PC-3 (cell line): ENCODE measurements at regions of chr3 and their contacts with region 1.

Region 1: GRCh38 chr3:49454458-49454857 is 15.6 kb upstream of the DAG1 start:
- DNase-seq: peak; percentile 66
- ATAC-seq: peak; percentile 89
- H3K4me3 ChIP-seq: no peak overlapping the region
- H3K27ac ChIP-seq: no peak overlapping the region
- H3K4me1 ChIP-seq: 0 out of 2 replicates have a peak, but pooled peaks cover 4% of the 10 kb centered on the region
- H3K27me3 ChIP-seq: no peaks in the 10 kb centered on the region
- CTCF ChIP-seq: peak; percentile 65

Region 2: DNA sequence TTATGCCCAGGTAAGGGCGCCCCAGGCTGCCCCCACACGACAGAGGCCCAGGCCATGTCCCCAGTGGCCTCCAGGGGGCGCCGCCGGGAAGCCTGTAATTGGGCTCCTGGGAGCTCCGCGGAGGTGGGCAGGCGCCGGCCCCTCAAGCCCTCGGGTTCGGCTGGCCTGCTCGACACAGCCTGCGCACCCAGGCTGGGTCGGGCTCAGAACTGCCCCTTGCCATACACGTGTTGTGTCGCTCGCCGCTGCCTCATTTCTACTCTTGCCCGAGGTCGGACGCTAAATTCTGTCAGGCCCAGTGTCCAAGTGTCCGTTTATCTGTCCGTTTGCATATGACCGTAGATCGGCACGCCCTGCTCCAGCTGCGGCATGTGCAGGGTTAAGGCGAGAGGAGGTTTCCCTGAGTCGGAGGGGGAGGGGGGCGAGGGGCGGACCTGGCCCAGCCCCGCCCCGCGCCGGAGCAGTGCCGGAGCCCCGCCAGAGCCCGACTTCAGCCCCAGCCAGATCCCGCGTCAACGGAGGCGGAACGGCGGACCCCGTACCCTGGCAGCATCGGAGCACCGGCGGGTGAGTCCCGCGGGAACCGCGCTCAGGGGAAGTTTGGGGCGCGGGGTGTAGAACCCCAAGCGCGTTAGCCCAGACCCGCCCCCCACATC is 283.2 kb before region 1 on chr3 and contains the start of gene KLHDC8B:
- CTCF ChIA-PET with region 1: interaction called, 3 read pairs
- POLR2A ChIA-PET with region 1: no interaction called
- intact Hi-C with region 1: loop called (anchors 1 kb)
- DNase-seq: peak; percentile 81
- ATAC-seq: peak; percentile 91
- H3K4me3 ChIP-seq: peak within 1 kb of the TSS; percentile 74
- H3K27ac ChIP-seq: no peak within 1 kb of the TSS
- H3K4me1 ChIP-seq: peaks cover 18% of the 10 kb centered on the region
- H3K27me3 ChIP-seq: no peaks in the 10 kb centered on the region
- CTCF ChIP-seq: peak; percentile 97
- total RNA-seq, gene KLHDC8B: 24.3 and 34.4 TPM in 2 replicates

Region 3: GRCh38 chr3:49327485-49327884 is 127.0 kb before region 1 on chr3:
- CTCF ChIA-PET with region 1: interaction called, 3 read pairs
- POLR2A ChIA-PET with region 1: no interaction called
- intact Hi-C with region 1: loop called (anchors 1 kb)
- DNase-seq: peak; percentile 58
- ATAC-seq: peak; percentile 74
- H3K4me3 ChIP-seq: no peak overlapping the region
- H3K27ac ChIP-seq: no peak overlapping the region
- H3K4me1 ChIP-seq: no peaks in the 10 kb centered on the region
- H3K27me3 ChIP-seq: no peaks in the 10 kb centered on the region
- CTCF ChIP-seq: peak; percentile 70

Region 4: DNA sequence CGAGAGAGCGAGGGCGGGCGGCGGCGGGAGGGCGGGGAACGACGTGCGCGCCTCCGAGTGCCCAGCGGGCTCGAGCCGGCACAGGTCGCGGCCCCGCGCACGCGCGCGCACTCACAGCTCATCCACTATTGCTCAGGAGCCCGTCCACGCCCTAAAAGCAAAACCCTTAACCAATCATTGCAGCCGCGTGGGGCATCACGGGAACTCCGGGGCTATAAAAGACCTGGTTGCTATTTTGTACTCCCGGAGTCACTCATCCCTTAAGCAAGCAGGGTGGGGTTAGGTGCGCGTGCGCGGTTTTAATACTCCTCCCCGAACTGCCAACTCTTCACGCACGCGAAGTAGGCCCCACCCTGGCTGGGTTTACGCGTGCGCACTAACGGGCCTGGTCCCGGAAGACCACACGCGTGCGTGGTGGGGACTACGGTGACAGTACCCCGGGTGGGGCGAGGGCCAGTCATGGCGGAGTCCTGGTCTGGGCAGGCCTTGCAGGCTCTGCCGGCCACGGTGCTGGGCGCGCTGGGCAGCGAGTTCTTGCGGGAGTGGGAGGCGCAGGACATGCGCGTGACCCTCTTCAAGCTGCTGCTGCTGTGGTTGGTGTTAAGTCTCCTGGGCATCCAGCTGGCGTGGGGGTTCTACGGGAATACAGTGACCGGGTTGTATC is 42.4 kb before region 1 on chr3 and contains the starts of genes RHOA and TCTA:
- CTCF ChIA-PET with region 1: interaction called, 7 read pairs
- POLR2A ChIA-PET with region 1: no interaction called
- intact Hi-C with region 1: loop called (anchors 1 kb)
- DNase-seq: peak; percentile 100
- ATAC-seq: peak; percentile 93
- H3K4me3 ChIP-seq: peak within 1 kb of the TSS; percentile 85
- H3K27ac ChIP-seq: peak within 1 kb of the TSS; percentile 66
- H3K4me1 ChIP-seq: peaks cover 32% of the 10 kb centered on the region
- H3K27me3 ChIP-seq: no peaks in the 10 kb centered on the region
- CTCF ChIP-seq: no peak
- total RNA-seq, gene RHOA: 278 and 292 TPM in 2 replicates
- total RNA-seq, gene TCTA: 23.7 and 25.4 TPM in 2 replicates

Region 5: GRCh38 chr3:49673715-49674496 is 219.4 kb after region 1 on chr3 and contains the start of gene APEH:
- CTCF ChIA-PET with region 1: no interaction called
- POLR2A ChIA-PET with region 1: no interaction called
- intact Hi-C with region 1: loop called (anchors 5 kb)
- DNase-seq: peak; percentile 98
- ATAC-seq: peak; percentile 81
- H3K4me3 ChIP-seq: peak within 1 kb of the TSS; percentile 88
- H3K27ac ChIP-seq: peak within 1 kb of the TSS; percentile 89
- H3K4me1 ChIP-seq: peaks cover 26% of the 10 kb centered on the region
- H3K27me3 ChIP-seq: no peaks in the 10 kb centered on the region
- CTCF ChIP-seq: no peak
- total RNA-seq, gene APEH: 236 and 246 TPM in 2 replicates